ENCODE measurements at regions of chr12 and their contacts with region 1.

Region 1: GRCh38 chr12:43282106-43282505 is 269.9 kb downstream of the ADAMTS20 start:
- DNase-seq: peak; percentile 58
- ATAC-seq: no peak
- H3K4me3 ChIP-seq: no peak overlapping the region
- H3K27ac ChIP-seq: no peak overlapping the region
- H3K4me1 ChIP-seq: peaks cover 45% of the 10 kb centered on the region
- H3K27me3 ChIP-seq: no peaks in the 10 kb centered on the region
- CTCF ChIP-seq: peak; percentile 79

Region 2: GRCh38 chr12:42482445-42483237 is 799.5 kb before region 1 on chr12:
- CTCF ChIA-PET with region 1: interaction called, 11 read pairs
- POLR2A ChIA-PET with region 1: interaction called, 12 read pairs
- intact Hi-C with region 1: loop called (anchors 1 kb)
- DNase-seq: peak; percentile 73
- ATAC-seq: peak; percentile 82
- H3K4me3 ChIP-seq: peak overlapping the region; percentile 78
- H3K27ac ChIP-seq: peak overlapping the region; percentile 54
- H3K4me1 ChIP-seq: peaks cover 18% of the 10 kb centered on the region; the same call in 1 of the 2 replicates
- H3K27me3 ChIP-seq: no peaks in the 10 kb centered on the region
- CTCF ChIP-seq: peak; percentile 94

Region 3: DNA sequence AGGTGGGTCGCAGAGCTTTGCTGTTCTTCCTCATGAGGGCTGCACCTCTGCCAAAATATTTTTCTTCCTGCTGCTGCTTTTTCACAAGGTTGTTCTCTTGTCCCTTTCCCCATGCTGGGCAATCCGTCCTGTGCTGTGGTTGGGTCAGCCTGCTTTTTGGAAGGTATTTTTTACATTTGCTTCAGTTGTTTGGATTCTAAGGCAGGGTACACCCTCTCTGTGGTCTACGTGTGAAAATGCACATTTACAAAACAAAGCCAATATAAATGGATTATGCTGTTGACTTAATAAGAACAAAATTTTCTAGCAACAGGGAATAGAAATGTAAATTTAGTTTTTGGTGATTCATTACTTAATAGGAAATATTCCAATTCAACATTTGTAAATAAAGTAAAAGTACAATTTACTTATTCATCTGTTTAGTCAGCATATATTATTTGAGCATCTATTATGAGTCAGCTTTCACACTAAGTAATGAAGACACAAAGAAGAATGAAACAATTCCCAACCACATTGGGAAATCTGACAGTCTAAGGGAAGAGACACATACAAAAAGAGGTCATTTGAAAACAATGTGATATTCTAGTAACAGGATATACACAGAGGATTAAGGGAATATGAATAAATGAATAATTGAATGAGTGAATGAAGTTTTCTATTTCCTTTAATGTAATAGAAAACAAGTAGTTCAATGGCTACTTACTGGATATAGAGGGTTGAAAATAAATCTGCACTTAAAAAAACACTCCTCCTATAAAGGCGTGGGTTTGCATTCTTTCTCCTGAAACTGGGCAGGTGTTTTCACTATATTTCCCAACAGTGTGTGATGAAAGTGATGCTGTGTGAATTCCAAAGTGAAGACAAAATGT is 597.9 kb before region 1 on chr12:
- CTCF ChIA-PET with region 1: no interaction called
- POLR2A ChIA-PET with region 1: no interaction called
- intact Hi-C with region 1: loop called (anchors 10 kb)
- DNase-seq: peak; percentile 71
- ATAC-seq: peak; percentile 75
- H3K4me3 ChIP-seq: no peak overlapping the region
- H3K27ac ChIP-seq: peak overlapping the region; percentile 49
- H3K4me1 ChIP-seq: peaks cover 40% of the 10 kb centered on the region
- H3K27me3 ChIP-seq: no peaks in the 10 kb centered on the region
- CTCF ChIP-seq: no peak

Region 4: GRCh38 chr12:42961395-42961794 is 320.7 kb before region 1 on chr12:
- CTCF ChIA-PET with region 1: interaction called, 7 read pairs
- POLR2A ChIA-PET with region 1: no interaction called
- intact Hi-C with region 1: loop called (anchors 1 kb)
- DNase-seq: peak; percentile 97
- ATAC-seq: peak; percentile 49
- H3K4me3 ChIP-seq: no peak overlapping the region
- H3K27ac ChIP-seq: peak overlapping the region; percentile 78
- H3K4me1 ChIP-seq: peaks cover 85% of the 10 kb centered on the region
- H3K27me3 ChIP-seq: no peaks in the 10 kb centered on the region
- CTCF ChIP-seq: no peak

Region 5: GRCh38 chr12:43167691-43168090 is 114.4 kb before region 1 on chr12:
- CTCF ChIA-PET with region 1: interaction called, 3 read pairs
- POLR2A ChIA-PET with region 1: no interaction called
- intact Hi-C with region 1: loop called (anchors 1 kb)
- DNase-seq: no peak
- ATAC-seq: no peak
- H3K4me3 ChIP-seq: no peak overlapping the region
- H3K27ac ChIP-seq: no peak overlapping the region
- H3K4me1 ChIP-seq: peaks cover 10% of the 10 kb centered on the region; the same call in 1 of the 2 replicates
- H3K27me3 ChIP-seq: no peaks in the 10 kb centered on the region
- CTCF ChIP-seq: no peak

Region 6: DNA sequence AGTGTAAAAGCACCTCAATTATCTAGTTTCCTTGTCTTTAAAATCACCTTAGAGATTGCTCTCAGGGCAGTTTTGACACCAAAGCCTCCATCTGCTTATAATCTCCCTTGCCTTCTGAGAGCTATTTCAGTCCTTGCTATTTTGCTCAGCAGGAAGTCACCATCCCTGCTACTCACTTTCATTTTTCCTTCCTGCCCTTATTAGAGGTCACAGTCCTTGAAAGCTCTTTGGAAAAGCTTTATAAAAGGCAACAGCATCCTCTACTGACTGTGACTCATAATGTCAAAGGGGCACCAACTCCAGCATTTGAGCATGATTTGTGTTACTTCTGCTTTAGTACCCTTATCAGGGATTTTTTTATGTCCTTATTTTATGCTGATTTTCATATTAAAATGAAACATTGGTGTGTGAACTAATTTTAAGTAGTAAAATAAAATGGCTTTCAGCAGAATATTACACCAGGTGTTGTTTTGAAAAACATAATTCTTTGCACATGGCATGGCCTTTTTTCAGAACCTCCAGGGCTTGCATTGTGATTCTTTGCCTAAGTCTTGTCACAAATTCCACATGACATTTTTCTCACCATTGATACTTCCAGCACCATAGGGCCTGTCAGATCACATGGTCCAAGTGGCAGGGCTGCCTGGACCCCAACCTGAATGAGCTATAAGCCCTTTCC is 56.9 kb after region 1 on chr12:
- CTCF ChIA-PET with region 1: interaction called, 3 read pairs
- POLR2A ChIA-PET with region 1: no interaction called
- intact Hi-C with region 1: loop called (anchors 2 kb)
- DNase-seq: peak; percentile 70
- ATAC-seq: peak; percentile 82
- H3K4me3 ChIP-seq: no peak overlapping the region; the same call in 1 of the 2 replicates
- H3K27ac ChIP-seq: peak overlapping the region; percentile 15; the same call in 1 of the 2 replicates
- H3K4me1 ChIP-seq: peaks cover 25% of the 10 kb centered on the region
- H3K27me3 ChIP-seq: no peaks in the 10 kb centered on the region
- CTCF ChIP-seq: peak; percentile 73